Activated CD8-positive, alpha-beta T cell treated with anti-CD3 and anti-CD28 coated beads for 36 hours (primary cell): ENCODE measurements at regions of chr10 and their contacts with region 1.

Region 1: GRCh38 chr10:88835096-88835909 is 16.3 kb downstream of the ANKRD22 start:
- DNase-seq: peak; percentile 95
- ATAC-seq: peak; percentile 84
- H3K4me3 Mint-ChIP-seq: no peak overlapping the region
- H3K27ac Mint-ChIP-seq: no peak overlapping the region
- H3K4me1 Mint-ChIP-seq: peaks cover 35% of the 10 kb centered on the region
- H3K27me3 Mint-ChIP-seq: no peaks in the 10 kb centered on the region
- CTCF ChIP-seq: peak; percentile 86

Region 2: DNA sequence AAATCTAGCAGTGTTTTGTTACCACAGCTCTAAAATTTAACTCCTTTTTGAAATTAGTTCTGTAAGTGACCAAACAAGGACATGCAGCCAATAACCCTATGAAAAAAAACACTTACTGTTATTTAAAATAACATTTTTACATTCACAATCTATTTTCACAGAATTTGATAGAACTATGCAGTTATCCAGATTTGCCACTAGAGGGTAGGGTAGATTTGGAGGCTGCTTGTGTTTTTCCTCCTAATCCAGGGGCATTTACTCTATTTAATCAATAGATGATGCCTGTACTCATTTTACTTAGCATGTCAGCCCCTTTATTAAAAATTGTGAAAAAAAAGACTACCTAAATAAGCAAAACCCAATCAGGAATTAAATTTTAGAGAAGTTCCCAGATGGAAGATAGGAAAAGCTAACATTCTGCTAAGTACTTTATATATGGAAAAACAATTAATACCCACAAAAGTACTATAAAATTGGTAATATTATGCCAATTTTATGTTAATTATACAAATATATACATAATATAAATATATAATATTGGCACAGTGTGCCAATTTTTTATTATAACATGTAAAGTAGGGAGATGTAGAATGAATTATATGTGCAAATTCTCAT is 147.3 kb before region 1 on chr10:
- CTCF ChIA-PET with region 1: interaction called, 13 read pairs
- POLR2A ChIA-PET with region 1: no interaction called
- intact Hi-C with region 1: no loop called
- DNase-seq: no peak
- ATAC-seq: peak; percentile 56
- H3K4me3 Mint-ChIP-seq: no peak overlapping the region
- H3K27ac Mint-ChIP-seq: no peak overlapping the region
- H3K4me1 Mint-ChIP-seq: no peaks in the 10 kb centered on the region
- H3K27me3 Mint-ChIP-seq: peaks cover 3% of the 10 kb centered on the region
- CTCF ChIP-seq: peak; percentile 98

Region 3: DNA sequence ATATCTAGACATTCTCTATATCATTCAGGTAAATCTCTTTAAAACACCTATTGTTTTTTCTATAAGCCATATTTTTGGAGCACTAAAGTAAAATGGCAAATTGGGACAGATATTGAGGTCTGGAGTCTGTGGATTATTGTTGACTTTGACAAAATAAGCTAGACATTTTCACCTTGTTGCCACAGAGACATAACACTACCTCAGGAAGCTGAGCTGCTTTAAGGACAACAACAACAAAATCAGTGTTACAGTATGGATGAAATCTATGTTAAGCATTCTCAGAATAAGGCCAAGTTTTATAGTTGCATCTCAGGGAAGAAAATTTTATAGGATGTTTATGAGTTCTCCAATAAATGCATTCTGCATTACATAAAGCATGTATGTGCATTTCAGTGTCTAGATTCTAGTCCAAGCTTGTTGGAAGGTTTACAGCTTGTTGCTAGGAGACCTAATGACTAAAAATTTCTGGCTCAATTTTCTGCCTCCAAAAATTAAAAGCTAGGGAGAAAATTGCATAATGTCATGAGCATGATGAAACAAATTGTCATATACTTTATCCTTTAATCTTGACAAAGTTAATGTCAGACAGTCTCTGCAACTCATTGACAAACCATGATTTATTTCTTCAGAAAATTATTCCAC is 14.4 kb before region 1 on chr10:
- CTCF ChIA-PET with region 1: interaction called, 66 read pairs
- POLR2A ChIA-PET with region 1: interaction called, 3 read pairs
- intact Hi-C with region 1: no loop called
- DNase-seq: no peak
- ATAC-seq: no peak
- H3K4me3 Mint-ChIP-seq: no peak overlapping the region
- H3K27ac Mint-ChIP-seq: no peak overlapping the region
- H3K4me1 Mint-ChIP-seq: peaks cover 18% of the 10 kb centered on the region
- H3K27me3 Mint-ChIP-seq: no peaks in the 10 kb centered on the region
- CTCF ChIP-seq: no peak

Region 4: GRCh38 chr10:88880282-88881076 is 45.2 kb after region 1 on chr10:
- CTCF ChIA-PET with region 1: interaction called, 34 read pairs
- POLR2A ChIA-PET with region 1: interaction called, 4 read pairs
- intact Hi-C with region 1: loop called (anchors 1 kb)
- DNase-seq: peak; percentile 89
- ATAC-seq: peak; percentile 83
- H3K4me3 Mint-ChIP-seq: peak overlapping the region; percentile 91
- H3K27ac Mint-ChIP-seq: peak overlapping the region; percentile 98
- H3K4me1 Mint-ChIP-seq: peaks cover 61% of the 10 kb centered on the region
- H3K27me3 Mint-ChIP-seq: no peaks in the 10 kb centered on the region
- CTCF ChIP-seq: no peak

Region 5: DNA sequence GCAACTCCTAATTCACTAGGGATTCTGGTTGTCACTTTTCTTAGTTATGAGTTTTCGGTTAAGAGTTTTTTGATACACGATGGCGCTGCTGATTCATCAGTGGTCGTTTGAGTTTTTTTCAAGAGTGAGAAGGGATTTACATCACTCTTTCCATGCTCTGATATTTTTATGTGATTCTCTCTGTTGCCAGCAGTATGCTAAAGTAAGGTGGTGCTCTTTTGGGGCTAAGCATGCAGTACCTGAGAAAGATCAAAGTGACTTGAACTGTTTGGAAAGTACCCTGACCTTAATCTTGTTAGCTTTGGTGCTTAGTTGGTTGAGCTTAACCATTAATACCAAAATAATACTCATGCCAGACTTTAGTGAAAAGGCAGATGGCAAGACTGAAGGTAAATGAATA is 72.9 kb after region 1 on chr10:
- CTCF ChIA-PET with region 1: interaction called, 54 read pairs
- POLR2A ChIA-PET with region 1: no interaction called
- intact Hi-C with region 1: no loop called
- DNase-seq: peak; percentile 51
- ATAC-seq: peak; percentile 95
- H3K4me3 Mint-ChIP-seq: no peak overlapping the region
- H3K27ac Mint-ChIP-seq: peak overlapping the region; percentile 79
- H3K4me1 Mint-ChIP-seq: peaks cover 27% of the 10 kb centered on the region
- H3K27me3 Mint-ChIP-seq: no peaks in the 10 kb centered on the region
- CTCF ChIP-seq: no peak

Region 6: GRCh38 chr10:89217057-89217990 is 382.0 kb after region 1 on chr10:
- CTCF ChIA-PET with region 1: interaction called, 10 read pairs
- POLR2A ChIA-PET with region 1: no interaction called
- intact Hi-C with region 1: loop called (anchors 5 kb)
- DNase-seq: peak; percentile 83
- ATAC-seq: peak; percentile 39
- H3K4me3 Mint-ChIP-seq: no peak overlapping the region
- H3K27ac Mint-ChIP-seq: no peak overlapping the region
- H3K4me1 Mint-ChIP-seq: peaks cover 12% of the 10 kb centered on the region
- H3K27me3 Mint-ChIP-seq: peaks cover 1% of the 10 kb centered on the region
- CTCF ChIP-seq: peak; percentile 57